Activated T-helper 1 cell treated with anti-CD3 and anti-CD28 coated beads, Interleukin-12 subunit alpha, Interleukin-12 subunit beta, Interleukin-2, Interleukin-4 antibody, amounts not matched to agents 30 ng/mL and 10 ng/mL and 1 ng/mL, durations not matched to agents 14 hours and 24 hours and 36 hours (primary cell): ENCODE measurements at regions of chr9 and their contacts with region 1.

Region 1: GRCh38 chr9:20552874-20553575 is 69.3 kb downstream of the MLLT3 start:
- DNase-seq: peak; percentile 1
- H3K4me3 Mint-ChIP-seq: peak overlapping the region; percentile 59
- H3K27ac Mint-ChIP-seq: peak overlapping the region; percentile 64
- H3K4me1 Mint-ChIP-seq: peaks cover 76% of the 10 kb centered on the region
- H3K27me3 Mint-ChIP-seq: no peaks in the 10 kb centered on the region

Region 2: GRCh38 chr9:19976226-19976625 is 576.8 kb before region 1 on chr9:
- intact Hi-C with region 1: loop called (anchors 2 kb)
- DNase-seq: peak; percentile 47
- H3K4me3 Mint-ChIP-seq: peak overlapping the region; percentile 1
- H3K27ac Mint-ChIP-seq: peak overlapping the region; percentile 92
- H3K4me1 Mint-ChIP-seq: peaks cover 51% of the 10 kb centered on the region
- H3K27me3 Mint-ChIP-seq: no peaks in the 10 kb centered on the region

Region 3: DNA sequence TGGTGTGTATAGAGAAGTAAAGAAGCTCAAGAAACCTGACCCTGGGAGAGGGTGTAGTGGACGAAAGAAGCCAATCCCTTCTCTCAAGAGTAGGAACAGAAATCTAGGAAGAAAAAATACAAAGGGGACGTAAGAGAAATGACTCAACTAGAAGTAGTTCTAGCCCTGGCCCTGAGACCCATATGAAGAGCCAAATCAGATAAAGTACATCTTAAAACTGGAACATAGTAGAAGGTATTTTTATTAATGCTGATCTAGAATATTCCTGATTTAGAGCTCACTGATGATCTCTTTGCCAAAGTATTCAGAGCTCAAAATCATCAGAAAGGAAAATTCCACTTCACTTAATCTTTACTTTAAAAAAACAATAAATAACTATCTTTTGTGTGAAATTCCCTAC is 115.5 kb before region 1 on chr9:
- intact Hi-C with region 1: loop called (anchors 2 kb)
- DNase-seq: no peak
- H3K4me3 Mint-ChIP-seq: no peak overlapping the region
- H3K27ac Mint-ChIP-seq: no peak overlapping the region
- H3K4me1 Mint-ChIP-seq: peaks cover 30% of the 10 kb centered on the region
- H3K27me3 Mint-ChIP-seq: no peaks in the 10 kb centered on the region

Region 4: DNA sequence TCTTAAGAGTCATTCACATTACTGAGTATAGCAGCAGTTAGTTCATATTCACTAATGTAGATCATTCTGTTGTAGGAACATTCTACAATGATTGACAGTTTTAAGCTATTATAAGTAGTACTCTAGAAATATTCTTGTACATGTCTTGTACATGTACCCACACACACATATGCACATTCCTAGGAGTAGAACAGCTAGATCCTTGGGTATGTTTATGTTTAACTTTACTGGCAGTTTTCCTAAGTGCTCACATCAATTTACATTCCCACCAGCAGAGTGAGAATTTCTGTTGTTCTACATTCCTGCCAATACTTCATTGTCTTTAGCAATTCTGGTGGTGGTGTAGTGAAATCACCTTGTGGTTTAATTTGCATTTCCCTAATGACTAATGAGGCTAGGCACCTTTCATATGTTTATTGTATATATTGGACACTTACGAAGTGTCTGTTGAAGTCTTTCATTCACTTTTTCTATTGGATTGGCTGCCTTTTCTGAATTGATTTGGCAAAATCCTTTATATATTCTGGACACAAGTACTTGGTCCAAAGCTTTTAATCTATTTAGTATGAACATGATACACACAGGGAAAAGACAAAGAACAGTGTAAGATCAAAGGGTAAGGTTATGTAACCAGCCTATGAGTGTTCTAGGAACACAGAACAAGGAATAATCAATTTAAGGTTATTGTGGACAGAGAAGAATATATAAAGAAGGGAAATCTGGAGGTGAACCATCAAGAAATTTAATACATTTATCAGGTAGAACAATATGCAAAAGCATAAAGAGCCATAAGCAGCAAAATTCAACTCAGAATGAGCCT is 26.3 kb before region 1 on chr9:
- intact Hi-C with region 1: loop called (anchors 2 kb)
- DNase-seq: no peak
- H3K4me3 Mint-ChIP-seq: no peak overlapping the region
- H3K27ac Mint-ChIP-seq: no peak overlapping the region
- H3K4me1 Mint-ChIP-seq: peaks cover 85% of the 10 kb centered on the region
- H3K27me3 Mint-ChIP-seq: no peaks in the 10 kb centered on the region

Region 5: DNA sequence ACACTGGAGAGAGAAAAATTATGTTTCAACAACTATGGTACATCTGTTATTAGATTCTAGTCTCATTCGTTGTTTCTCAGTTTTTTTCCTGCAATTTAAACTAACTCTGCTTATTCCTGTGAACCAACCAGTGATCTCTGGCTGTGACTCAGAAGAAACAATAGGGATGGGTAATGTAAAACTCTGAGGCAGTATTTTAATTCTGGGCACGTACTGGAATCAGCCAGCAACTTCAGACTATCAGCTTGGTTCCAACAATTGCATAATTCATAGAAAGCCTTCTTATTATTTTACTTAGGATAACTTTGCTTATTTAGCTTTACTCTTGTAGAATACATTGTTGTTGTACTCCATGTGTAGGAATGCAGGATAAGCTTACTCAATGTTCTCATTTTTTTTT is 40.5 kb after region 1 on chr9:
- intact Hi-C with region 1: no loop called
- DNase-seq: no peak
- H3K4me3 Mint-ChIP-seq: no peak overlapping the region
- H3K27ac Mint-ChIP-seq: no peak overlapping the region
- H3K4me1 Mint-ChIP-seq: peaks cover 39% of the 10 kb centered on the region
- H3K27me3 Mint-ChIP-seq: no peaks in the 10 kb centered on the region

Region 6: GRCh38 chr9:21096172-21096900 is 543.3 kb after region 1 on chr9:
- intact Hi-C with region 1: loop called (anchors 5 kb)
- DNase-seq: peak; percentile 38
- H3K4me3 Mint-ChIP-seq: peak overlapping the region; percentile 54
- H3K27ac Mint-ChIP-seq: peak overlapping the region; percentile 56
- H3K4me1 Mint-ChIP-seq: peaks cover 35% of the 10 kb centered on the region
- H3K27me3 Mint-ChIP-seq: no peaks in the 10 kb centered on the region